GM12878 (cell line): ENCODE measurements at regions of chr14 and their contacts with region 1.

Region 1: DNA sequence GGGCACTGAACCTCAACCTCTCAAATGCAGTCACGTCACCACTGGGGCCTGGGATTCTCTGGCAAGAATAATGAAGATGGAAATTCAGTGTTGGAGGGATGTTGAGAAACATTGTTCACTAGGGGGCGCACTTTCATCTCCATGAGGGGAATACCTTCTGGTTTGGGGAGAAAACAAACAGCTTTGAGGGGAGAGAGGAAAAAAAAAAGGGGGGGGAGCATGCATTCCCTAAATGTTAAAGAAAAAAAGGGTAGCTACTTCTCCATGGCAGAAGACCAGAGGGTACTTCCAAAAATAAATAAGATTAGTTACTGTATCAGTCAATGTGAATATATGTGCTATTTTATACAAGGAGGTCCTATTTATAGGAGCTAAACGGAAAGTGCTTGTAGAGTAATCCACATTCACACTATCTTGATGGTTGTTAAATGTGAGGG is 5.8 kb upstream of the TBPL2 start:
- DNase-seq: no peak
- ATAC-seq: peak; percentile 72
- H3K4me3 ChIP-seq: no peak overlapping the region
- H3K27ac ChIP-seq: no peak overlapping the region
- H3K4me1 ChIP-seq: no peaks in the 10 kb centered on the region
- H3K27me3 ChIP-seq: no peaks in the 10 kb centered on the region
- CTCF ChIP-seq: peak; percentile 62 to 68 (median 62)
- EP300 ChIP-seq: no peak
- POLR2A ChIP-seq: no peak
- RAD21 ChIP-seq: peak; percentile 82

Region 2: DNA sequence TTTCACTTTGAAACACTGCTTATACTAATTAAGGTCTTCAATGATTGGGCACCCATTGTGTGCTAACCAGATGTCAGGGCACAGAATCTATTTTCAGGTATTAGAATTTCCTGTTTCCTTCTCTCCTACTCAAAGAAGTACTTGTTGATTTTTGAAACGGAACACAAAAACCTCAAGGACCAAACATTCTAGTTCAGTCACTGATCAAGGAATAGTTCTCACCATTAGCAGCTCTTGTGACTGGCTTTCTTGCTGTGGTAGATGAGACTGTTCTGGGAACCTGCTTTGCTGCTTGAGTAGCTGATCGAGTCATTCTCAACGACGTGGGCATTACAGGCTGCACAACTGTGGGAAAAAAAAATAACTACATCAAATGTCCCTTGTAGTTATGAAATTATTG is 265.8 kb before region 1 on chr14:
- CTCF ChIA-PET with region 1: no interaction called
- POLR2A ChIA-PET with region 1: no interaction called
- RAD21 ChIA-PET with region 1: no interaction called
- SMC1A ChIA-PET with region 1: no interaction called
- in situ Hi-C with region 1: no loop called
- intact Hi-C with region 1: no loop called
- DNase-seq: peak; percentile 98
- ATAC-seq: peak; percentile 94
- H3K4me3 ChIP-seq: no peak overlapping the region
- H3K27ac ChIP-seq: peak overlapping the region; percentile 67
- H3K4me1 ChIP-seq: peaks cover 16% of the 10 kb centered on the region
- H3K27me3 ChIP-seq: no peaks in the 10 kb centered on the region
- CTCF ChIP-seq: no peak
- EP300 ChIP-seq: no peak
- POLR2A ChIP-seq: no peak
- RAD21 ChIP-seq: no peak

Region 3: DNA sequence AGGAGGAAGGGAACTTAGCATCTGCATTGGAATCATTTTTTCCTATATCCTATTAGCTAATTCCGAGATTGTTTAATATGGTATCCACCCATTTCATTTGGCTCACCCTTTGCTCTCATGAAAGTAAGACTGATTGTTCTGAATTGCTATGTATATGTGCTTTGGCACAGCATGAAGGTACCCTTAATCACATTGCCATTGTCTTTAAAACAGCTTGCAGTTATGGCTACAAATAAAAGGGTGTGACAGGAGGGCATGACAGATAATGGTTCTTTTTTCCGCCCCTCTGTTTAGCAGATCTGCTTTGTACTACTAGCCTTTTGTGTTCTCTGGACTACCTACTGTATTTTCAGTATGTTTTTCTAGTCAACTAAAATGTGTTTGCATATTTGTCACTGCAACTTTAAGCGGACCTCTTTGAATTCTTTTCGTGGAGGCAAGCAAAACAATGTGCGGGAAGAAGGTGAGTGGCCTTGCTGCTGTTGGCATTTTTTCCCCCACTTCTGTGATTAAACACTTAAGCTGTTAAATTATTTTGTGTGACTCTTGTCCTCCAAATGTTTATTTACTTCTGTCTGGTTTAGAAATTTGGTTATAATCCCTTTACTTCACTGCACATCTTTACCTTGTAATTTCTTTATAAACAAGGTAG is 139.2 kb before region 1 on chr14:
- CTCF ChIA-PET with region 1: no interaction called
- POLR2A ChIA-PET with region 1: no interaction called
- RAD21 ChIA-PET with region 1: no interaction called
- SMC1A ChIA-PET with region 1: no interaction called
- in situ Hi-C with region 1: no loop called
- intact Hi-C with region 1: no loop called
- DNase-seq: no peak
- ATAC-seq: no peak
- H3K4me3 ChIP-seq: no peak overlapping the region
- H3K27ac ChIP-seq: no peak overlapping the region
- H3K4me1 ChIP-seq: peaks cover 19% of the 10 kb centered on the region
- H3K27me3 ChIP-seq: no peaks in the 10 kb centered on the region
- CTCF ChIP-seq: no peak
- EP300 ChIP-seq: no peak
- POLR2A ChIP-seq: no peak
- RAD21 ChIP-seq: no peak

Region 4: DNA sequence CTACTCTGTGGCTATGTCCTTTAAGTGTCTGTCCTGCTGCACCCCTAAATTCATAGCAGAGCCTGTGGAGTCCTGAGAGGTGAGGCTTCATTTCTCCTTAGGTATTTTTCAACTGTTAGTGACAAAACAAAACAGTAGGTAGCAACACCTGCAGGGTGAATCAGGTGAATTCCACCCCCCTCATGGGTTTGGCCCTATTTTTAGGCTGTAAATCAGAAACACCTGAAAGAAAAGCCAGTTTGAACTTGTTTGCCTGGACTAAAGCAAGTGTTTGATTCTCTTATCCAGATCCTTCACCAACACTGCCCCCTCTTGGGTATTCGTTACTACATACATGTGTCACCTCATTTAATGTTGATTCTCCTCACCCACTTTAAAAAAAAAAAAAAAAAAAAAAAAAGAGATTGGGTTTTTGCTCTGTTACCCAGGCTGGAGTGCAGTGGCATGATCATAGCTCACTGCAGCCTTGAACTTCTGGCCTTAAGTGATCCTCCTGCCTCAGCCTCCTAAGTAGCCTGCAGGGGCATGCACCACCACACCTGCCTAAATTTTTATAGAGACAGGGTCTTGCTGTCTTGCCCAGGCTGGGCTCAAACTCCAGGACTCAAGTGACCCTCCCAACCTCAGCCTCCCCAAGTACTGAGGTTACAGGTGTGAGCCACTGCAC is 16.1 kb before region 1 on chr14:
- CTCF ChIA-PET with region 1: interaction called, 11 read pairs
- POLR2A ChIA-PET with region 1: no interaction called
- RAD21 ChIA-PET with region 1: no interaction called
- SMC1A ChIA-PET with region 1: interaction called, 5 read pairs
- in situ Hi-C with region 1: no loop called
- intact Hi-C with region 1: no loop called
- DNase-seq: no peak
- ATAC-seq: peak; percentile 91
- H3K4me3 ChIP-seq: no peak overlapping the region
- H3K27ac ChIP-seq: no peak overlapping the region
- H3K4me1 ChIP-seq: peaks cover 3% of the 10 kb centered on the region; the same call in 1 of the 2 replicates
- H3K27me3 ChIP-seq: no peaks in the 10 kb centered on the region
- CTCF ChIP-seq: peak; percentile 34 to 55 (median 48); a peak in 5 of 6 replicates
- EP300 ChIP-seq: no peak
- POLR2A ChIP-seq: no peak
- RAD21 ChIP-seq: peak; percentile 73

Region 5: GRCh38 chr14:55572578-55572977 is 126.3 kb after region 1 on chr14:
- CTCF ChIA-PET with region 1: interaction called, 11 read pairs
- POLR2A ChIA-PET with region 1: no interaction called
- RAD21 ChIA-PET with region 1: interaction called, 3 read pairs
- SMC1A ChIA-PET with region 1: interaction called, 13 read pairs
- in situ Hi-C with region 1: no loop called
- intact Hi-C with region 1: no loop called
- DNase-seq: no peak
- ATAC-seq: no peak
- H3K4me3 ChIP-seq: no peak overlapping the region
- H3K27ac ChIP-seq: no peak overlapping the region
- H3K4me1 ChIP-seq: peaks cover 13% of the 10 kb centered on the region
- H3K27me3 ChIP-seq: no peaks in the 10 kb centered on the region
- CTCF ChIP-seq: no peak
- EP300 ChIP-seq: no peak
- POLR2A ChIP-seq: no peak
- RAD21 ChIP-seq: no peak

Region 6: GRCh38 chr14:55628426-55628825 is 182.2 kb after region 1 on chr14:
- CTCF ChIA-PET with region 1: interaction called, 10 read pairs
- POLR2A ChIA-PET with region 1: no interaction called
- RAD21 ChIA-PET with region 1: interaction called, 3 read pairs
- SMC1A ChIA-PET with region 1: interaction called, 4 read pairs
- in situ Hi-C with region 1: no loop called
- intact Hi-C with region 1: no loop called
- DNase-seq: no peak
- ATAC-seq: no peak
- H3K4me3 ChIP-seq: no peak overlapping the region
- H3K27ac ChIP-seq: no peak overlapping the region
- H3K4me1 ChIP-seq: no peaks in the 10 kb centered on the region
- H3K27me3 ChIP-seq: no peaks in the 10 kb centered on the region
- CTCF ChIP-seq: no peak
- EP300 ChIP-seq: no peak
- POLR2A ChIP-seq: no peak
- RAD21 ChIP-seq: no peak

Region 7: DNA sequence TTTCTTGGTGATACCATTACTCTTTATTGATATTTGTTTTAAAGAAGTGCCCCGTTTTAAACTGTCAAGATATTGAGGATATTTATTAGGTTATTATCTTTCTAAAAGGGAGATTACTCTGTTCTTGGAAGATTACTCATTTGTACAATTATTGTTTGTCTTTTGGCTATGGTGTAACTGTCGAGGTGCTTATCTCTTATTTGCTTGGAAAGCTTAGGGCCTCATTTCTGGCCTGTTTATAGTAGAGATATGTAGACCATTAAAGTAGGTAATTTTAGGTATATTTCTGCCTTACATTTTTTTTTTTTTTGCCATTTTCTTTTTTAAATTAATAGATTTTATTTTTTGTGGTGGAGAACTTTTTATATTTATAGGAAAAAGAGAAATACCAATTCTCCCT is 208.0 kb after region 1 on chr14:
- CTCF ChIA-PET with region 1: interaction called, 21 read pairs
- POLR2A ChIA-PET with region 1: interaction called, 3 read pairs
- RAD21 ChIA-PET with region 1: interaction called, 3 read pairs
- SMC1A ChIA-PET with region 1: interaction called, 12 read pairs
- in situ Hi-C with region 1: no loop called
- intact Hi-C with region 1: no loop called
- DNase-seq: no peak
- ATAC-seq: no peak
- H3K4me3 ChIP-seq: no peak overlapping the region
- H3K27ac ChIP-seq: no peak overlapping the region
- H3K4me1 ChIP-seq: no peaks in the 10 kb centered on the region
- H3K27me3 ChIP-seq: no peaks in the 10 kb centered on the region
- CTCF ChIP-seq: no peak
- EP300 ChIP-seq: no peak
- POLR2A ChIP-seq: no peak
- RAD21 ChIP-seq: no peak

Region 8: GRCh38 chr14:55731881-55732498 is 285.8 kb after region 1 on chr14:
- CTCF ChIA-PET with region 1: interaction called, 17 read pairs
- POLR2A ChIA-PET with region 1: no interaction called
- RAD21 ChIA-PET with region 1: interaction called, 3 read pairs
- SMC1A ChIA-PET with region 1: interaction called, 5 read pairs
- in situ Hi-C with region 1: no loop called
- intact Hi-C with region 1: no loop called
- DNase-seq: no peak
- ATAC-seq: peak; percentile 77
- H3K4me3 ChIP-seq: no peak overlapping the region
- H3K27ac ChIP-seq: no peak overlapping the region
- H3K4me1 ChIP-seq: no peaks in the 10 kb centered on the region
- H3K27me3 ChIP-seq: no peaks in the 10 kb centered on the region
- CTCF ChIP-seq: peak; percentile 53 to 64 (median 63)
- EP300 ChIP-seq: no peak
- POLR2A ChIP-seq: no peak
- RAD21 ChIP-seq: peak; percentile 64